K562 (cell line): ENCODE measurements at regions of chr5 and their contacts with region 1.

Region 1: GRCh38 chr5:126514131-126514557 is 80.9 kb downstream of the ALDH7A1 start:
- DNase-seq: peak in 3 of 4 experiments; percentile 30 to 95 (median 75)
- ATAC-seq: peak; percentile 78
- H3K4me3 ChIP-seq: peak overlapping the region; percentile 19; the same call in 1 of the 2 replicates
- H3K27ac ChIP-seq: peak overlapping the region; percentile 98
- H3K4me1 ChIP-seq: peaks cover 3 to 47% of the 10 kb centered on the region in 2 experiments
- H3K27me3 ChIP-seq: no peaks in the 10 kb centered on the region
- CTCF ChIP-seq: no peak
- EP300 ChIP-seq: peak; percentile 78
- POLR2A ChIP-seq: no peak
- RAD21 ChIP-seq: no peak

Region 2: DNA sequence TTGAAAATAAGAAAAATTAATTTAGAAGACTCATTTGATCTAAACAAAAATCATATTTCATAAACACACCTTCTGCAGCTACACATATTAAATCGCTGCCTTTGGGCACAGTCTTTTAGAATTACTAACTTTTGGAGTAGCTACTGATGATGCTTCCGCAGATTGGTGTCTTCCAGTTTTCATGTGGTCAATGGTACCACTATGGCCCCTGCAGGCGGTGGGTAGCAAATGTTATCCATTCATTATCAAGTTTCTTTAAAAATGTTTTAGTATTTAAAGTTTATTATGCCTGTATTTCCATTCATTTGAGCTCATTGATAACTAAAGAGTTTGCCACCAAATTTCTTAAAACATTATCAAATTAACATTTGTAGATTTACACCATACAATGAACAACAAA is 213.9 kb before region 1 on chr5:
- CTCF ChIA-PET with region 1: no interaction called
- POLR2A ChIA-PET with region 1: no interaction called
- in situ Hi-C with region 1: no loop called
- intact Hi-C with region 1: no loop called
- DNase-seq: no peak
- ATAC-seq: no peak
- H3K4me3 ChIP-seq: no peak overlapping the region
- H3K27ac ChIP-seq: no peak overlapping the region
- H3K4me1 ChIP-seq: no peaks in the 10 kb centered on the region
- H3K27me3 ChIP-seq: no peaks in the 10 kb centered on the region
- CTCF ChIP-seq: peak in 1 of 3 experiments; percentile 9; a peak in 1 of 6 replicates
- EP300 ChIP-seq: no peak
- POLR2A ChIP-seq: no peak
- RAD21 ChIP-seq: peak in 1 of 2 experiments; percentile 16; a peak in 2 of 4 replicates

Region 3: GRCh38 chr5:126438267-126438666 is 75.9 kb before region 1 on chr5:
- CTCF ChIA-PET with region 1: no interaction called
- POLR2A ChIA-PET with region 1: no interaction called
- in situ Hi-C with region 1: no loop called
- intact Hi-C with region 1: no loop called
- DNase-seq: no peak
- ATAC-seq: no peak
- H3K4me3 ChIP-seq: no peak overlapping the region
- H3K27ac ChIP-seq: no peak overlapping the region
- H3K4me1 ChIP-seq: no peaks in the 10 kb centered on the region
- H3K27me3 ChIP-seq: no peaks in the 10 kb centered on the region
- CTCF ChIP-seq: no peak
- EP300 ChIP-seq: no peak
- POLR2A ChIP-seq: no peak
- RAD21 ChIP-seq: no peak

Region 4: GRCh38 chr5:126531543-126532120 is 17.5 kb after region 1 on chr5:
- CTCF ChIA-PET with region 1: no interaction called
- POLR2A ChIA-PET with region 1: interaction called, 3 read pairs
- in situ Hi-C with region 1: no loop called
- intact Hi-C with region 1: loop called (anchors 2 kb)
- DNase-seq: peak in 2 of 4 experiments; percentile 81 to 86
- ATAC-seq: peak; percentile 93
- H3K4me3 ChIP-seq: no peak overlapping the region
- H3K27ac ChIP-seq: peak overlapping the region; percentile 72
- H3K4me1 ChIP-seq: peaks cover 5 to 12% of the 10 kb centered on the region in 2 experiments; a peak in 2 of 5 replicates
- H3K27me3 ChIP-seq: no peaks in the 10 kb centered on the region
- CTCF ChIP-seq: no peak
- EP300 ChIP-seq: peak; percentile 81; the same call in 1 of the 2 replicates
- POLR2A ChIP-seq: no peak
- RAD21 ChIP-seq: no peak

Region 5: GRCh38 chr5:126769703-126770102 is 255.6 kb after region 1 on chr5:
- CTCF ChIA-PET with region 1: no interaction called
- POLR2A ChIA-PET with region 1: no interaction called
- in situ Hi-C with region 1: no loop called
- intact Hi-C with region 1: no loop called
- DNase-seq: no peak
- ATAC-seq: no peak
- H3K4me3 ChIP-seq: no peak overlapping the region
- H3K27ac ChIP-seq: no peak overlapping the region
- H3K4me1 ChIP-seq: no peaks in the 10 kb centered on the region
- H3K27me3 ChIP-seq: no peaks in the 10 kb centered on the region
- CTCF ChIP-seq: no peak
- EP300 ChIP-seq: no peak
- POLR2A ChIP-seq: no peak
- RAD21 ChIP-seq: no peak

Region 6: GRCh38 chr5:127097278-127097677 is 583.1 kb after region 1 on chr5:
- CTCF ChIA-PET with region 1: no interaction called
- POLR2A ChIA-PET with region 1: no interaction called
- in situ Hi-C with region 1: no loop called
- intact Hi-C with region 1: no loop called
- DNase-seq: no peak
- ATAC-seq: no peak
- H3K4me3 ChIP-seq: no peak overlapping the region
- H3K27ac ChIP-seq: no peak overlapping the region
- H3K4me1 ChIP-seq: peaks cover 0 to 4% of the 10 kb centered on the region in 2 experiments; a peak in 1 of 5 replicates
- H3K27me3 ChIP-seq: peaks cover 12 to 36% of the 10 kb centered on the region in 2 experiments; a peak in 4 of 5 replicates
- CTCF ChIP-seq: no peak
- EP300 ChIP-seq: no peak
- POLR2A ChIP-seq: no peak
- RAD21 ChIP-seq: no peak